Common myeloid progenitor, CD34-positive (primary cell): ENCODE measurements at regions of chr3 and their contacts with region 1.

Region 1: DNA sequence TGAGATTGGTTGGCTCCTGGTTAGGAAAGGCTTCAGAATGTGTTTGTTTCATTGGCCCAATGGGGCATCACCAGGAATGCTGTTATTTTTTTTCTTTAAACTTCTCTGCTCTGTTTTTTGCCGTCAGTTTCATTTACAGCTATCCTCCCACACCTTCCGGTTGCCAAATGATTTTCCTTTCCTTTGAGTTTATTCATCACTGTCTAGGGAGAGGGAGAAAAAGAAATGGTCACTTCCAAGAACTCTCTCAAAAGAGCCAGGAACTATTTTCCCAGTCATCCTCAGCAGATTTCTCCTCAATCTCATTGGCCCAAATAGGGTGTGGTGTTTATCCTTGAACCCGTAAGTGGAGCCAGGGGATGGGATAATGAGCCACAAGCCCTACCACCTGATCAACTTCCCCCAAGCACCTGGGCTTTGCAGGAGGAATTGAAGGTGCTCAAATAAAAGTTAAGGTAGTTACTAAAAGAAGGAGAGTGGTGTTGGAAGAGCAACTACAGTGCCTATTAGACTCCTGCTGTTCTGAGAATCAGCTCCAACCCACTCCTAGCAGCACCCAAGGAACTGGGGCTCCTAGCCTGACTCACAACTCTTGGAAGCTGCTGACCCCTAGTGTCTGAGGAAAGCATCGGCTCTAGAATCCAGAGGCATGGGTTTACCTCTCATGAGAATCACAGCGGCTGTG is 183.8 kb upstream of the IL12A start:
- DNase-seq: peak; percentile 62 to 86 (median 82)
- H3K4me3 ChIP-seq: no peak overlapping the region
- H3K27ac ChIP-seq: no peak overlapping the region
- H3K4me1 ChIP-seq: no peaks in the 10 kb centered on the region
- H3K27me3 ChIP-seq: no peaks in the 10 kb centered on the region

Region 2: DNA sequence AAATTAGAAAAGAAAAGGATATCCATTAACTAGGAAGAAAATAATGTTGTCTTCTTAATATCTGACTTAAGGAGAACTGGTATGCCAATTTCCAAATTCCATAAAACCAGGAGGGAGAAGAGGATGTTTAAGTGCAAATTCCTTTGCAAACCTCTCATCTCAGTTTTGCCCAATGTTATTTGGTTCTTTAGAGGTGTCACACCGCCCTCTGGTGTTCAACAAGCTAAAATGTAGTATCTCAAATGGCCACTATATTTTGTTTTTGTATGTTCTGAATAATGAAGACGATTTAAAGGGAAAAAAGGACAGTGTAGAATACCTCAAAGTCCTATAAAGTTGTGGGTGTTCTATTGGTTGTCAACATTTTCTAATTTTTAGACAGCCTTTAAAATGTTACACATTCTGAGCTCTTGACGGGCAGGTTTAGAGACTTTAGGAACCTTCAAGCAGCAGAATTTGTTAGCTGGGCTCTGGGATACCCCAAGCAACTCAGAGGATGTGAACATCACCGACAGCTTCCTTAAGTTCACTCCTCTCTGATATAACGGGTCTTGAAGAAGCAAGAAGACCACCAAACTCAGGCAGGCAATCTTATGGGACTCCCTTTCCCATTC is 544.7 kb before region 1 on chr3:
- CTCF ChIA-PET with region 1: interaction called, 36 read pairs
- POLR2A ChIA-PET with region 1: no interaction called
- DNase-seq: peak; percentile 60 to 83 (median 73)
- H3K4me3 ChIP-seq: no peak overlapping the region
- H3K27ac ChIP-seq: no peak overlapping the region
- H3K4me1 ChIP-seq: no peaks in the 10 kb centered on the region
- H3K27me3 ChIP-seq: peaks cover 0 to 9% (median 3%) of the 10 kb centered on the region in 5 experiments

Region 3: GRCh38 chr3:159322322-159322939 is 482.4 kb before region 1 on chr3:
- CTCF ChIA-PET with region 1: interaction called, 34 read pairs
- POLR2A ChIA-PET with region 1: no interaction called
- DNase-seq: peak; percentile 18 to 49 (median 37)
- H3K4me3 ChIP-seq: no peak overlapping the region
- H3K27ac ChIP-seq: no peak overlapping the region
- H3K4me1 ChIP-seq: no peaks in the 10 kb centered on the region
- H3K27me3 ChIP-seq: peaks cover 0 to 1% (median 0%) of the 10 kb centered on the region in 5 experiments

Region 4: DNA sequence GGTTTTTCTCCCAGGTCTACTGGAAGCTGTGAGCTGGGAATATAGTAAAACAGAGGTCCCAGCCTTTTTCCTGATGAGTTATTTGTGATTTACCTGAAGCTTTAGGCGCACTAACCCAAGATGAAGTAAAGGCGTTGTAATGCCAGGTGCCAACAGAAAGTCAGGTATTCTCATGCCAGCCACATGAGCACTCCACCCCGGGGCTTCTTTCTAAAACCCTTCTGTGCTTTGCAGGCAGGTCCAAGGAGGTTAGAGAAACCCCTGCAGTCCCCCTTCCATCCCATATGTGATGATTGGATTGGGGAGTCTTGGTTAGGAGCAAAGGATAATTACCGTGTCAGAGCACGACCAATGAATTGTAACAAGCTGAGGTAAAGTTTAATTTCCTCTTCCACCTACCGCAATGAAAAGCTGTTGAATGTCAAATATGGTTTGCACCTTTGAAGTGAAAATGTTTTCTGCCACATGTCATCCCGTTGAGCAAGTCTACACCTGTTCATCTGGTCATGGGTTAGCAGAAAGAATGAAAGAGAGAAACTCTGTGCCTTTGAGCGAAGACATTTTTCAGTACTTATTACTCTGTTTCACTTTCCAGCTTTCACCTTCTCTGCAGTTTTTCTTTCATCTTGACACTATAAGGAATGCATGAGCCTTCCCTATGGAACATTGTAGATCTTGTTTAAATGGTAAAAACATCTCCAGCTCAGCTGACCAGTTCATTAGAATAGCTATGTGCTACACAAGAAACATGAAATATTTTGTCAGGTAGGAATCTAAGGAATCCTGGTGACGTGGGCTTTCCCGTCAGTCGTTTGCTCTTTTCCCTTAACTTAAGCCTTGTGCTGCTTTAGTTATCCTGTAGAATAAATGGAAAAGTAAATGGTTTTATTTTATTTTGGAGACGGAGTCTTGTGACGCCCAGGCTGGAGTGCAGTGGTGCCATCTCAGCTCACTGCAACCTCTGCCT is 20.8 kb before region 1 on chr3:
- CTCF ChIA-PET with region 1: interaction called, 62 read pairs
- POLR2A ChIA-PET with region 1: no interaction called
- DNase-seq: no peak
- H3K4me3 ChIP-seq: no peak overlapping the region
- H3K27ac ChIP-seq: no peak overlapping the region
- H3K4me1 ChIP-seq: no peaks in the 10 kb centered on the region
- H3K27me3 ChIP-seq: no peaks in the 10 kb centered on the region

Region 5: GRCh38 chr3:159872374-159873109 is 67.7 kb after region 1 on chr3:
- CTCF ChIA-PET with region 1: no interaction called
- POLR2A ChIA-PET with region 1: no interaction called
- DNase-seq: peak; percentile 48 to 81 (median 75)
- H3K4me3 ChIP-seq: no peak overlapping the region
- H3K27ac ChIP-seq: no peak overlapping the region
- H3K4me1 ChIP-seq: peaks cover 0 to 30% (median 6%) of the 10 kb centered on the region in 4 experiments
- H3K27me3 ChIP-seq: no peaks in the 10 kb centered on the region